Breast epithelium (tissue), 4 donors: ENCODE measurements at regions of chr16 and their contacts with region 1.

Region 1: GRCh38 chr16:4358831-4359561 is 7.9 kb upstream of the PAM16 start:
- DNase-seq: peak in 1 of 2 donors; percentile 70
- H3K4me3 ChIP-seq: no peak overlapping the region
- H3K27ac ChIP-seq: no peak overlapping the region
- H3K4me1 ChIP-seq: no peaks in the 10 kb centered on the region
- H3K27me3 ChIP-seq: no peaks in the 10 kb centered on the region
- CTCF ChIP-seq: peak; percentile 95 to 98 (median 96)
- POLR2A ChIP-seq: no peak

Region 2: GRCh38 chr16:4392382-4393239 is 33.6 kb after region 1 on chr16:
- intact Hi-C with region 1: loop called (anchors 5 kb)
- DNase-seq: peak in 1 of 2 donors; percentile 82
- H3K4me3 ChIP-seq: peak overlapping the region in 1 of 3 donors; percentile 12
- H3K27ac ChIP-seq: peak overlapping the region; percentile 87 to 95
- H3K4me1 ChIP-seq: peaks cover 6 to 13% of the 10 kb centered on the region in 2 donors
- H3K27me3 ChIP-seq: no peaks in the 10 kb centered on the region
- CTCF ChIP-seq: no peak
- POLR2A ChIP-seq: no peak

Region 3: DNA sequence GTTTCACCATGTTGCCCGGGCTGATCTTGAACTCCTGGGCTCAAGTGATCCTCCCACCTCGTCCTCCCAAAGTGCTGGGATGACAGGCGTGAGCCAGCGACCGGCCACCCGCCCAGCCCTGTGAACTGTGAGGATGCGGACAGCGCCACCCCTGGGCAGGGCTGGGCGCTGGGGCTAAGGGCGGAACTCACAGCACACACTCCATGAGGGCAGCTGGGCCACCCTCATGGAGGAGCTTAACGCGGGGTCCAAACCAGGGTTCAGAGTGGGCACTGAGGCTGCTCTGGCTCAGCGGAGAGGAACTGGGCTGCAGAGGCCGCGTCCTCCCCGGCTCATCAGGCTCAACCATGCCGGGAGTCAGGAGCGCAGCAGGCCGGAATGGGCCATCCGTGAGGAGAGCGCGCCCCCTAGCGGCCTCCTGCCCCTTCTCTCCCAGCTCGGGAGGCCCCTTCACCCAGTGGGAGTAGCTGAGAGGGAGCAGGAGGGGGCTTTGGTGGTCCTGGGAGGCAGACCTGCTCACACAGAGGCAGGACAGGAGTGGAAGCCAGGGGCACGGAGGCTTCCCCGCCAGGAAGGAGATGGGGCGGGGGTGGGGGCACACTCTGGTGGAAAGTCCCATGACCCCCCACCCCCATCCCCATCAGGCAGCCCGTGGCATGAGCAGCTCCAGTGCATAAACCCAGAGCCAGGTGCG is 43.6 kb after region 1 on chr16:
- intact Hi-C with region 1: loop called (anchors 2 kb)
- DNase-seq: peak; percentile 74 to 91
- H3K4me3 ChIP-seq: peak overlapping the region in 2 of 3 donors; percentile 15 to 52
- H3K27ac ChIP-seq: no peak overlapping the region
- H3K4me1 ChIP-seq: peaks cover 0 to 3% of the 10 kb centered on the region in 2 donors
- H3K27me3 ChIP-seq: no peaks in the 10 kb centered on the region
- CTCF ChIP-seq: peak; percentile 85 to 97 (median 96)
- POLR2A ChIP-seq: no peak